ENCODE measurements at regions of chr20 and their contacts with region 1.

Region 1: GRCh38 chr20:48657475-48658470 is 170.0 kb downstream of the PREX1 start:
- DNase-seq: peak; percentile 21
- ATAC-seq: peak; percentile 94
- H3K4me3 ChIP-seq: no peak overlapping the region
- H3K27ac ChIP-seq: no peak overlapping the region
- H3K4me1 ChIP-seq: no peaks in the 10 kb centered on the region
- H3K27me3 ChIP-seq: no peaks in the 10 kb centered on the region
- CTCF ChIP-seq: peak; percentile 91 to 96 (median 93)
- EP300 ChIP-seq: no peak
- POLR2A ChIP-seq: no peak
- RAD21 ChIP-seq: peak; percentile 95

Region 2: DNA sequence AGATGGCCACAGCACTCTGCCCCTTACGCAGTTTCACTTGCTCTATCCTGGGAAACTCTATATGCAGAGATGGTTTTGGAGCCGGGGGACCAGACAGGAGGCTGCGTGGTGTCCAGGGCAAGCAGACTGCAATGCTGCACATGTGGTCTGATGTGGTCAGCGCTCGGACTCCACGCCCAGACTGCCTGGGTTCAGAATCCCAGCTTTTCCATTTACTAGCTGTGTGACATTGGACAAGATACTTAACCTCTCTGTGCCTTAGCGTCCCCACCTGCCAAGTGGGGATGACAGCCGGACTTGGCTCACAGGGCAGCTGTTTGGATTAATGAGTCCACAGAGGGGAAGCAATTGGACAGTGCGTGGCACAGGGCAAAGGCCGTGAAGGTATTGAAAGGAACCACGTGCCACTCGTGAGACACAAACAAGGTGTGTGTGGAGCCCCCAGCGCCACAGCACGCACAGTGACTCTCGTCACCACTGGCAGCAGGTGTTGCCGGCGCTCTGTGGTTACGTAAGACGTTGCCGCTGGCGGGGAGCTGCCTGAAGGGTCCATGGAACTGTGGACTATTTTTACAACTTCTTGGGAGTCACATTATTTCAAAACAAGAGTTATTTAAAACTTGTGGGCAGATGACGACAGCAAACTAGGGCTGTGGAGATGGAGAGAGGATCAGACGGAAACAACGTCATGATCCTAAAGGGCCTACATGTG is 31.4 kb before region 1 on chr20:
- CTCF ChIA-PET with region 1: no interaction called
- POLR2A ChIA-PET with region 1: no interaction called
- RAD21 ChIA-PET with region 1: no interaction called
- SMC1A ChIA-PET with region 1: no interaction called
- in situ Hi-C with region 1: no loop called
- intact Hi-C with region 1: no loop called
- DNase-seq: no peak
- ATAC-seq: no peak
- H3K4me3 ChIP-seq: no peak overlapping the region
- H3K27ac ChIP-seq: no peak overlapping the region
- H3K4me1 ChIP-seq: no peaks in the 10 kb centered on the region; the same call in 1 of the 2 replicates
- H3K27me3 ChIP-seq: no peaks in the 10 kb centered on the region
- CTCF ChIP-seq: no peak
- EP300 ChIP-seq: no peak
- POLR2A ChIP-seq: no peak
- RAD21 ChIP-seq: no peak

Region 3: GRCh38 chr20:48897246-48897994 is 239.6 kb after region 1 on chr20:
- CTCF ChIA-PET with region 1: interaction called, 21 read pairs
- POLR2A ChIA-PET with region 1: no interaction called
- RAD21 ChIA-PET with region 1: interaction called, 18 read pairs
- SMC1A ChIA-PET with region 1: interaction called, 10 read pairs
- in situ Hi-C with region 1: no loop called
- intact Hi-C with region 1: no loop called
- DNase-seq: no peak
- ATAC-seq: no peak; the same call in 2 of the 3 replicates
- H3K4me3 ChIP-seq: no peak overlapping the region
- H3K27ac ChIP-seq: no peak overlapping the region
- H3K4me1 ChIP-seq: peaks cover 5% of the 10 kb centered on the region
- H3K27me3 ChIP-seq: no peaks in the 10 kb centered on the region
- CTCF ChIP-seq: no peak
- EP300 ChIP-seq: no peak
- POLR2A ChIP-seq: no peak
- RAD21 ChIP-seq: no peak

Region 4: DNA sequence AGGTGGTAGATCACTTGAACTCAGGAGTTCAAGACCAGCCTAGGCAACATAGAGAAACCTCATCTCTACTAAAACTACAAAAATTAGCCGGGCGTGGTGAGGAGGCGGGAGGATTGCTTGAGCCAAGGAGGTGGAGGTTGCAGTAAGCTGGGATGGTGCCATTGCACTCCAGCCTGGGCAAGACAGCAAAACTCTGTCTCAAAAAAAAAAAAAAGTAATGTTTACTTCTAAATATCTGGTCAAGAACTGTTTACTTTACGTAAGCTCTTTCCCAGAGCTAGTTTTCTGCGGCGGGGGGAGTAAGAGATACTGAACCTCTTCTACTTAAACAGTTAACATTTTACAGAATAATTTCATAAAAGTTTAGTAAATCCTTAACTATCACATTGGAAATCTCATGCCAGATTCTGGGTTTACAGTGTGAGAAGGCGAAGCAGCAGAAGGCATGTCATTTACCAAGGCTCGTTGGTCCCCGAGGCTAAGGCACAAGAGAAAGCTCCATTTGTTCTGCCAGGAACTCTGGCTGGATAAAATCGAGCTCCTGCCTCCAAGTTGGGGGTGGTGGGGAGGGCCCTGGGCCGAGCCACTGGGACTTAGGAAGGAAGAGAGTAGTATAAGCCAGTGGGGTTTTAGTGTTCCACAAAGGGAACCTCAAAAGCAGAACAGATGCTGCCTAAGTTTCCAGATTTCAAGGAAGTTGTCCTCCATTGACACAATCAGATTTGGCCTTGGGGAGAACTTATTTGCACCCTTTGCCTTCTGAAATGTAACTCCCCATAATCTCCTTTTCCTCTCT is 305.4 kb after region 1 on chr20:
- CTCF ChIA-PET with region 1: interaction called, 3 read pairs
- POLR2A ChIA-PET with region 1: no interaction called
- RAD21 ChIA-PET with region 1: interaction called, 3 read pairs
- SMC1A ChIA-PET with region 1: interaction called, 3 read pairs
- in situ Hi-C with region 1: no loop called
- intact Hi-C with region 1: loop called (anchors 10 kb)
- DNase-seq: no peak
- ATAC-seq: no peak
- H3K4me3 ChIP-seq: no peak overlapping the region
- H3K27ac ChIP-seq: no peak overlapping the region
- H3K4me1 ChIP-seq: no peaks in the 10 kb centered on the region
- H3K27me3 ChIP-seq: no peaks in the 10 kb centered on the region
- CTCF ChIP-seq: no peak
- EP300 ChIP-seq: no peak
- POLR2A ChIP-seq: no peak
- RAD21 ChIP-seq: no peak